ENCODE measurements at regions of chr17 and their contacts with region 1.

Region 1: DNA sequence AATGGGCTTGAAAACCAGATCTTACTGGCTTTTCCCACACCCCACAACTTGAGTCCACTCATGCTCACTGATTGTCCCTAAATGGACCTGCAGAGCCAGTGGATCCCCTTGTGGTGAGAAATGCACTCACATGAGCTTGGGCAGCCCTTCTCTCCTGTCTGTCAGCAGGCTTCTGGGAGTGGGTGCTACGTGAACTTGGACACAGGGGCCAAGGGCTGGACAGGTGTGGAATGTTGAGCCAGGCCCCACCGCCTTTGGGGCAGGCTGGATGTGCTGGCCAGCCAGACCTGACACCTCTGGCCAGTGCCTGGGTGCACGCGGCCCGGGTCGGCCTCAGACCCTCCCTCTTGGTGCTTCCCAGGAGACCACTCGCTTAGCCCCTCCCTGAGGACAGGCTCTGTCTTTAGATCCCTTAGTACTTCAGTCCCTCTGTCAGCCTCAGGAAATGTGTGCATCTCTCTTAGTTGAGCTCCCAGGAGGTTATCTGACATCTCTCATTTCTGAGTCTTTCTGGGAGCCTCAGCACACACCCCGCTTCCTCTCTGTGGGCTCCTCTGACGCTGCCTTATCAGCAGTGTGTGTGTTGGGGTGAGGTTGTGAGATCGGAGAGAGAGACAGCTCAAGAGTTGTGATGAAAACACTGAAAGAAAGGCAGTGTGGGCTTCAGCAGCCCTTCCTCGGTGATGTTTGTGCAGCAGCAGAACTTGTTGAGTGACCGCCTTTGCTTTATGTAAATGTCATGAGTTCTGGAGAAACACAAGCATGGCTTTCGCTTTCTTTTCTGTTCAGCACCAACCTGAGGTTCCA is 117.0 kb downstream of the RAB11FIP4 start:
- DNase-seq: peak; percentile 52 to 90 (median 76)
- ATAC-seq: peak; percentile 90 to 93 (median 91)
- H3K4me3 ChIP-seq: peak overlapping the region; percentile 44 to 64
- H3K4me3 Mint-ChIP-seq: peak overlapping the region; percentile 83 to 90 (median 84)
- H3K27ac ChIP-seq: peak overlapping the region; percentile 83
- H3K27ac Mint-ChIP-seq: peak overlapping the region; percentile 100
- H3K4me1 ChIP-seq: peaks cover 35 to 68% of the 10 kb centered on the region in 2 experiments
- H3K4me1 Mint-ChIP-seq: peaks cover 71 to 74% (median 73%) of the 10 kb centered on the region in 3 donors
- H3K27me3 ChIP-seq: no peaks in the 10 kb centered on the region
- H3K27me3 Mint-ChIP-seq: no peaks in the 10 kb centered on the region

Region 2: GRCh38 chr17:31487648-31488263 is 20.7 kb before region 1 on chr17:
- CTCF ChIA-PET with region 1: interaction called in 1 of 2 experiments, 33 read pairs
- POLR2A ChIA-PET with region 1: interaction called, 5 to 18 read pairs
- DNase-seq: peak; percentile 89 to 99 (median 95)
- ATAC-seq: peak; percentile 90 to 92 (median 90)
- H3K4me3 ChIP-seq: peak overlapping the region; percentile 74 to 84
- H3K4me3 Mint-ChIP-seq: peak overlapping the region; percentile 82 to 84 (median 84)
- H3K27ac ChIP-seq: peak overlapping the region; percentile 71
- H3K27ac Mint-ChIP-seq: peak overlapping the region; percentile 93 to 95
- H3K4me1 ChIP-seq: peaks cover 30 to 55% of the 10 kb centered on the region in 2 experiments
- H3K4me1 Mint-ChIP-seq: peaks cover 49 to 53% (median 50%) of the 10 kb centered on the region in 3 donors
- H3K27me3 ChIP-seq: no peaks in the 10 kb centered on the region
- H3K27me3 Mint-ChIP-seq: no peaks in the 10 kb centered on the region

Region 3: GRCh38 chr17:31494259-31495021 is 14.1 kb before region 1 on chr17:
- CTCF ChIA-PET with region 1: interaction called in 1 of 2 experiments, 21 read pairs
- POLR2A ChIA-PET with region 1: interaction called, 5 to 7 read pairs
- DNase-seq: peak in 34 of 35 experiments; percentile 36 to 84 (median 56)
- ATAC-seq: peak; percentile 82 to 86 (median 86)
- H3K4me3 ChIP-seq: no peak overlapping the region
- H3K4me3 Mint-ChIP-seq: peak overlapping the region; percentile 63 to 84 (median 66)
- H3K27ac ChIP-seq: peak overlapping the region; percentile 84
- H3K27ac Mint-ChIP-seq: peak overlapping the region; percentile 99
- H3K4me1 ChIP-seq: peaks cover 59 to 97% of the 10 kb centered on the region in 2 experiments
- H3K4me1 Mint-ChIP-seq: peaks cover 92 to 98% (median 98%) of the 10 kb centered on the region in 3 donors
- H3K27me3 ChIP-seq: no peaks in the 10 kb centered on the region
- H3K27me3 Mint-ChIP-seq: no peaks in the 10 kb centered on the region

Region 4: GRCh38 chr17:31558748-31559644 is 50.5 kb after region 1 on chr17:
- CTCF ChIA-PET with region 1: no interaction called
- POLR2A ChIA-PET with region 1: no interaction called
- DNase-seq: peak in 30 of 35 experiments; percentile 5 to 71 (median 34)
- ATAC-seq: peak; percentile 94 to 96 (median 96)
- H3K4me3 ChIP-seq: peak overlapping the region; percentile 43 to 61
- H3K4me3 Mint-ChIP-seq: peak overlapping the region; percentile 57 to 73 (median 70)
- H3K27ac ChIP-seq: no peak overlapping the region
- H3K27ac Mint-ChIP-seq: no peak overlapping the region
- H3K4me1 ChIP-seq: peaks cover 2 to 15% of the 10 kb centered on the region in 2 experiments
- H3K4me1 Mint-ChIP-seq: peaks cover 8 to 21% (median 14%) of the 10 kb centered on the region in 3 donors
- H3K27me3 ChIP-seq: peaks cover 0 to 24% of the 10 kb centered on the region in 2 experiments
- H3K27me3 Mint-ChIP-seq: peaks cover 0 to 12% of the 10 kb centered on the region in 2 donors